ENCODE measurements at regions of chr1 and their contacts with region 1.

Region 1: DNA sequence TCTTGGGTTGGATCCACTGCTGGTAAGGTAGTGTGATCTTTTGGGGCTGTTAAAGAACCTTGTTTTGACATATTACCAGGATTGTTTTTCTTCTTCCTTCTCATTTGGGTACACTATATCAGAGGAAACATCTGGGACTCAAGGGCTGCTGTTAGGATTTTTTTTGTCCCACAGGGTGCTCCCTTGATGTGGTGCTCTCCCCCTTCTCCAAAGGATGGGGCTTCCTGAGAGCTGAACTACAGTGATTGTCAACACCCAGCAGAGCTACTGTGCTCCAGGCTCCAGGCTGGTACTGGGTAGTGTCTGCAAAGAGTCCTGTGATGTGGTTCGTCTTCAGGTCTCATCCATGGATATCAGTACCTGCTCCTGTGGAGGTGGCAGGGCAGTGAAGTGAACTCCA is 20.6 kb downstream of the IFI16 start:
- DNase-seq: no peak
- H3K4me3 Mint-ChIP-seq: no peak overlapping the region
- H3K27ac Mint-ChIP-seq: no peak overlapping the region
- H3K4me1 Mint-ChIP-seq: peaks cover 31% of the 10 kb centered on the region
- H3K27me3 Mint-ChIP-seq: no peaks in the 10 kb centered on the region
- CTCF ChIP-seq: no peak

Region 2: GRCh38 chr1:159015440-159015909 is 14.8 kb before region 1 on chr1:
- CTCF ChIA-PET with region 1: no interaction called
- POLR2A ChIA-PET with region 1: interaction called, 14 read pairs
- intact Hi-C with region 1: no loop called
- DNase-seq: peak; percentile 96
- H3K4me3 Mint-ChIP-seq: peak overlapping the region; percentile 88
- H3K27ac Mint-ChIP-seq: peak overlapping the region; percentile 95
- H3K4me1 Mint-ChIP-seq: peaks cover 69% of the 10 kb centered on the region
- H3K27me3 Mint-ChIP-seq: no peaks in the 10 kb centered on the region
- CTCF ChIP-seq: no peak